Activated naive CD4-positive, alpha-beta T cell treated with anti-CD3 and anti-CD28 coated beads for 36 hours (primary cell): ENCODE measurements at regions of chr6 and their contacts with region 1.

Region 1: GRCh38 chr6:12289933-12290820 is at the start of gene EDN1:
- DNase-seq: peak; percentile 76
- H3K4me3 Mint-ChIP-seq: peak within 1 kb of the TSS; percentile 79
- H3K27ac Mint-ChIP-seq: no peak within 1 kb of the TSS
- H3K4me1 Mint-ChIP-seq: peaks cover 14% of the 10 kb centered on the region
- H3K27me3 Mint-ChIP-seq: peaks cover 26% of the 10 kb centered on the region
- total RNA-seq, gene EDN1: 0.15 to 0.24 TPM

Region 2: DNA sequence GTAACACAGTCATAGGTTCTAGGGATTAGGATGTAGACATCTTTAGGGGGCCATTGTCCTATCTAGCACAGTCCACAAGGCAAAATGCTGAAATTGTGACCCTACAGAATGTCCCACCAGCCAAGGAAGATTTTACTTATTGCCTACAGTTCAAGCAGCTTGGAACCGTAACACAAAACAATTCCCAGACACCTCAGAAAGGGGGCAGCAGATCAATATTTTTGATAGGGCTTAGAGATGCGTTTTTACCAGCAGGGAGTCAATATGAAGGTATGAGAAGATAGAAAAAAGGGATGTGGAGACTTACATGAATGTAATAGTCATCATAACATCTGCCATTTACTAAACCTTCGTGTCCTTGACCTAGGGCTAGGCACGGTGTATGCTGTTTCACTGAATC is 671.6 kb before region 1 on chr6:
- CTCF ChIA-PET with region 1: interaction called, 3 read pairs
- intact Hi-C with region 1: loop called (anchors 1 kb)
- DNase-seq: peak; percentile 18
- H3K4me3 Mint-ChIP-seq: no peak overlapping the region
- H3K27ac Mint-ChIP-seq: no peak overlapping the region
- H3K4me1 Mint-ChIP-seq: no peaks in the 10 kb centered on the region
- H3K27me3 Mint-ChIP-seq: no peaks in the 10 kb centered on the region

Region 3: DNA sequence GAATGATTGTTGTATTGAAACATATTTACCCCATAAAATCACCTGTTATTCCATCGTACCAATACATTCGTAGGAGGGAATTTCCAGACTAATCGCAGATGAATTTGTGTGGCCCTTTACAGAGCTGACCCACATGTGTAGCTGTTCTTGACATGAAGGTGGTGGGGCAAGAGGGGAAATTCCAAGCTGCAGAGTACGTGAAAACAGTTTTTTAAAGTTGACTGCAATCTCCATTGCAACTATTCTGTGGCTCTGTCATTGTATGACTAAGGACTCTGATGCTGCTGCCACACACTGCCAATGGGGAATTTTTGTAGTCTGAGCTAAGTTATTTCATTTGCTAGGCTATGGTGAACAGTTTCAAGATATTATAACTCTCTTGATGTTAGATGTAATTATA is 465.2 kb before region 1 on chr6:
- CTCF ChIA-PET with region 1: interaction called, 3 read pairs
- intact Hi-C with region 1: loop called (anchors 1 kb)
- DNase-seq: peak; percentile 55
- H3K4me3 Mint-ChIP-seq: no peak overlapping the region
- H3K27ac Mint-ChIP-seq: peak overlapping the region; percentile 65
- H3K4me1 Mint-ChIP-seq: peaks cover 11% of the 10 kb centered on the region
- H3K27me3 Mint-ChIP-seq: no peaks in the 10 kb centered on the region

Region 4: GRCh38 chr6:12504319-12504966 is 214.3 kb after region 1 on chr6:
- CTCF ChIA-PET with region 1: interaction called, 4 read pairs
- intact Hi-C with region 1: loop called (anchors 2 kb)
- DNase-seq: peak; percentile 22
- H3K4me3 Mint-ChIP-seq: no peak overlapping the region
- H3K27ac Mint-ChIP-seq: no peak overlapping the region
- H3K4me1 Mint-ChIP-seq: peaks cover 3% of the 10 kb centered on the region
- H3K27me3 Mint-ChIP-seq: peaks cover 3% of the 10 kb centered on the region

Region 5: DNA sequence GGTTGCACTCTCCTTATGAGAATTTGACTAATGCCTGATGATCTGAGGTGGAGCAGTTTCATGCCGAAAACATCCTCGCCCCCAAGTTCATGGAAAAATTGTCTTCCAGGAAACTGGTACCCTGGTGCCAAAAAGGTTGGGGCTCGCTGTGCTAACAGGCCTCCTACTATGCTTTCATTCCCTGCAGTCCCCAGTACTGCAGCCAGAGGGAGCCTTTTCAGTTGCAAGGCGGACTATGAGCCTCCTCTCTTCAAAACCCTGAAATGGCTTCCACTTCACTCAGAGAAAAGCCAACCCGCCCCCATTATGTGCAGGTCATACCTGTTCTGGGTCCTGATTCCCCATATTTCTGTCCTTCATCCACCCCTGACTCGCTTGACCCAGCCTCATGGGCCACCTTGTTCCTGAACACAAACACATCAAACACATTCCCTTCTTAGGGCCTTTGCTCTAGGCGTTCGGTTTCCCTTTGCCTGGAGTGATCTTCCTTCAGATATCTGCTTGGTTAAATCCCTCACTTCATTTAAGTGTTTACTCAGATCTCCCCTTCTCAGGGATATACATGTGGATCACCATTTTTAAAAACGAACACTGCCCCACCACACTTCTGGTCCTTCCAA is 600.1 kb after region 1 on chr6:
- CTCF ChIA-PET with region 1: no interaction called
- intact Hi-C with region 1: loop called (anchors 5 kb)
- DNase-seq: peak; percentile 31
- H3K4me3 Mint-ChIP-seq: no peak overlapping the region
- H3K27ac Mint-ChIP-seq: no peak overlapping the region
- H3K4me1 Mint-ChIP-seq: no peaks in the 10 kb centered on the region
- H3K27me3 Mint-ChIP-seq: peaks cover 15% of the 10 kb centered on the region

Region 6: GRCh38 chr6:13079096-13079723 is 789.0 kb after region 1 on chr6:
- CTCF ChIA-PET with region 1: no interaction called
- intact Hi-C with region 1: no loop called
- DNase-seq: no peak
- H3K4me3 Mint-ChIP-seq: no peak overlapping the region
- H3K27ac Mint-ChIP-seq: no peak overlapping the region
- H3K4me1 Mint-ChIP-seq: no peaks in the 10 kb centered on the region
- H3K27me3 Mint-ChIP-seq: peaks cover 9% of the 10 kb centered on the region